MCF 10A (cell line): ENCODE measurements at regions of chr4 and their contacts with region 1.

Region 1: DNA sequence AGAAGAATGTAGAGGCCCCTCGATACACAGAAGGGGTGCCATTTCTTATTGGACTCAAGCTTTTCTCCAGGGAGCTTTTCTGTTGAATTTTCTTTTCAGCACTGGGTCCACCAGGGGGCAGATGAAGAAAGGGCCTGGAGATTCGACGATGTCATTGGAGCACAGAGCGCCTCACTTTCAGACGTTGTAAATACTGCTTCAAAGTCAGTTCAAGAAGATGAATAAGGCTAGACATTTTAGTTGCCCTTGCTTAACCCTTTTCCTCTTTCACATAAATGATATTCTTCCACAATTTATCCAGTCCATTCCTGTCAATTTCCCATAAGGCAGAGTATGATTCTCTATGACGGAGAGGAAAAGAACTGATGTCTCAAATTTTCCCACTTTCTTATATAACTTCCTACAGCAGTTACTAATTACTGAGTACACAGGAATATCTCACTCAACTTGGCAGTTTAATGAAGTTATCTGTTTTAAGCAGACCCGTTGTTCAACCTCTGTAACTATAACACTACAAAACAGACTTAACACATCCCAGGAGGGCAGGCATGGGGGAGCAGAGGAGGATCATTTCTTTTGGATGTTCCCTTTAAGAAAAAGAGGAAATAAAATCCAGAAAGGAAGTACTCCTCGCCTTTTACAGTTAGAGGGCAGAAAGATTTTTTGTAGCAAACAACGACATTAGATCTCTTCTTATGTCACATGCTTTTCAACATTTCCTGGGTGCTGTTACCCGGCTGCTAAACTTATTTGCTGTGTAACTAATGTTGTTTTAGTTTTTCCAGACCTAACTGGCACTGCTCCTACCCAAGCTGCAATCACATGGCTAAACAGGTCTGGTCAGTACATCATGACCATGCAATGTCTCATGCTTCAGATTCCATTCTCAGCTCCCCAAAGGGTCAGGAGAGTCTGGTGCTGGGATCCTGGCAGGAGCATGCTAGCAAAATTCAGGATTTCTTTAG is 12.2 kb upstream of the CENPU start:
- DNase-seq: peak; percentile 76
- H3K4me3 Mint-ChIP-seq: peak overlapping the region; percentile 38
- H3K27ac Mint-ChIP-seq: peak overlapping the region; percentile 84
- H3K4me1 Mint-ChIP-seq: peaks cover 26% of the 10 kb centered on the region
- H3K27me3 Mint-ChIP-seq: no peaks in the 10 kb centered on the region
- CTCF ChIP-seq: peak; percentile 57

Region 2: DNA sequence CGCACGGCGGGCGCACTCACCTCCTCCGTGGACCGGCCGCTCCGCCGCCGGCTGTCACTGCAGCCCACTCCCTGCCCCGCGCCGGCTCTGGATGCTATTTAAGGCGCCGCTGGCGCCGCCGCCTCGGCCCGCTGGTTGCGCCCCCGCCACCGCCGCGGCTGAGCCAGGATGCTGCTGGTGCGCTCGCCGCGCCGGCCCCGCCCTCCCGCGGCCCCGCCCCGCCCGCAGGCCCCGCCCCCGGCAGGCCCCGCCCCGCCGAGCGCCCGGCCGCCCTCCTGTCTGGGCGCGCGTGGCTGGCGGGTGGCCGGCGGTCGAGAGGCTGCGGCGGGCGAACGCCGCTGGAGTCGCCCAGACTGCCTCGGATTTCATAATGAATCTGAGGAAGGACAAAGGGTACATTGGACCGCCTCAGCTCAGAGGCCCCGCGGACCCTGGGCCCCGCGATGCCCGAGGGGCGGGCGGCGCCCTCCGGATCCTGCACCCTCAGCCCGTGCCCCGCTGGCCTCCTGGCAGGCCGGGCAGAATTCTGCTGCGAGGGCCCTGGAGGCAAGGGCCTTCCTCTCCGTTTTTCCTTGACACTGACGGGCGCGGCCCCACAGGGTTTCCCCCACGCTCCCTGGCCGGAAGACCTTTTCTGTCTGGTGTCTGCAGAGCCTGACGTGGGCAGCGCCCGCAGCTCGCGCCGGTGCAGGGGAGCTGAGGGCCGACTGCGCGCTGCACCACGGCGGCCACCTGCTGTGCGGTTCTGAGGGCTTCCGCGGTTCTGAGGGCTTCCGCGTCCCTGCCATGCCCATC is 80.0 kb after region 1 on chr4 and contains the start of gene ACSL1:
- CTCF ChIA-PET with region 1: interaction called, 5 read pairs
- POLR2A ChIA-PET with region 1: interaction called, 4 read pairs
- intact Hi-C with region 1: loop called (anchors 5 kb)
- DNase-seq: peak; percentile 65
- H3K4me3 Mint-ChIP-seq: peak within 1 kb of the TSS; percentile 87
- H3K27ac Mint-ChIP-seq: peak within 1 kb of the TSS; percentile 50
- H3K4me1 Mint-ChIP-seq: peaks cover 23% of the 10 kb centered on the region
- H3K27me3 Mint-ChIP-seq: no peaks in the 10 kb centered on the region
- CTCF ChIP-seq: no peak
- total RNA-seq, gene ACSL1: 99.5 and 105 TPM in 2 replicates

Region 3: GRCh38 chr4:184911310-184911709 is 165.2 kb after region 1 on chr4:
- CTCF ChIA-PET with region 1: interaction called, 4 read pairs
- POLR2A ChIA-PET with region 1: interaction called, 3 read pairs
- intact Hi-C with region 1: loop called (anchors 1 kb)
- DNase-seq: peak; percentile 93
- H3K4me3 Mint-ChIP-seq: no peak overlapping the region
- H3K27ac Mint-ChIP-seq: no peak overlapping the region
- H3K4me1 Mint-ChIP-seq: peaks cover 28% of the 10 kb centered on the region
- H3K27me3 Mint-ChIP-seq: no peaks in the 10 kb centered on the region
- CTCF ChIP-seq: no peak

Region 4: DNA sequence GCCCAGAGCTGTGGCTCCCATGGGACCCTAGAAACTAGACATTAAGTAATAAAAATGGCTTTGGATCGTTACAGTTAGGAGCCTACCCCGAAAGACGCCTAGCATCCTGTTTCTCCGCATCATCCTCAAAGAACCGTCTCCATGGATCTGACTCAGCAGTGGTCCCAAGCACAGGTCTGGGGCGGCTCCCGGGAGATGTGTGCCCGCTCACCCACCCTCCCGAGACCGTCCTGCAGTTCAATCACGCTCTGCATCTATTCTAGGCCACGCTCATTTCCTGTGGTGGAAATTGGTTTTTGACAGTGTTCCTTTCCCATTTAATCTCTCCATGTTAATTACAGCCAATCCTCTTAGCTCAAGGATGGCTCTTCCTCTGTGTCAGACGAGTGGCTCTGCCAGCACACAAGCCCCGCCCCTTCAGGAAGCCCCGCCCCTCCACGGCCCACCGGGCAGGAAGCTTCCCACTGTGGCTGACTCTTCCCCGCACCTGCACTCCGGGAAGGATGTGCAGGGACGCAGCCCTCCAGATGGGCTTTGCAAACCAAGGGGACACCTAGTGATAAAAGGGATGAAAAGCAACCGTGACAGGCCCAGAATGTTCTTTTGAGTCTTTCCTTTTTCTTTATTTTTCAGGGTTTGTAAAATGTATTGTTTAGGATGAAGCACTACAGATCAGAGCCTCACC is 237.7 kb after region 1 on chr4:
- CTCF ChIA-PET with region 1: interaction called, 7 read pairs
- POLR2A ChIA-PET with region 1: interaction called, 3 read pairs
- intact Hi-C with region 1: loop called (anchors 1 kb)
- DNase-seq: peak; percentile 70
- H3K4me3 Mint-ChIP-seq: no peak overlapping the region
- H3K27ac Mint-ChIP-seq: no peak overlapping the region
- H3K4me1 Mint-ChIP-seq: peaks cover 3% of the 10 kb centered on the region
- H3K27me3 Mint-ChIP-seq: no peaks in the 10 kb centered on the region
- CTCF ChIP-seq: peak; percentile 47

Region 5: GRCh38 chr4:185005216-185005819 is 259.2 kb after region 1 on chr4:
- CTCF ChIA-PET with region 1: interaction called, 7 read pairs
- POLR2A ChIA-PET with region 1: no interaction called
- intact Hi-C with region 1: loop called (anchors 5 kb)
- DNase-seq: peak; percentile 88
- H3K4me3 Mint-ChIP-seq: peak overlapping the region; percentile 26
- H3K27ac Mint-ChIP-seq: no peak overlapping the region
- H3K4me1 Mint-ChIP-seq: peaks cover 8% of the 10 kb centered on the region
- H3K27me3 Mint-ChIP-seq: peaks cover 29% of the 10 kb centered on the region
- CTCF ChIP-seq: peak; percentile 93

Region 6: DNA sequence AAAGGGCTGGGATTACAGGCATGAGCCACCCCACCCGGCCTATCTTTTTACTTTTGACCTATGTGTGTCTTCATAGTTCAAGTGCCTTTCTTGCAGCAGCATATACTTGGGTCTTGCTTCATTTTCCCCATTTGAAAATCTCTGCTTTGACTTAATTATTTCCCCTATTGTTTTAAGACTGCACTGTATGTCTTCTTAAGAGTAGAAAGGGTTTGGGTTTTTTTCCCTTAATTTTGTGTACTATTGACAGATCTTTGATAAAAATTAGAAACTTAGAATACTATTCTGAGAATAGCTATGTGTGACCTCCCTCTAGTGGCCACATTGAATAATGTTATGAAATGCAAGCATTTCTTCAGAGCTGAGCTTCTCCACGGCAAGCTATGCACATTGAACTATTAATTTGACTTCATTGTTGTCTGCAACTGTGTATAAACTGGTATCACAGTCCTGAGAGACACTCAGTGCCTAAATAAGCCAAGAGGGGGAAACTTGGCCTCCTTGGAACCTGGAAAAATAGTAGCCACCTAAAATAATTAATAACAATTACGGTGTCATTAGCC is 388.3 kb after region 1 on chr4:
- CTCF ChIA-PET with region 1: interaction called, 7 read pairs
- POLR2A ChIA-PET with region 1: no interaction called
- intact Hi-C with region 1: loop called (anchors 1 kb)
- DNase-seq: peak; percentile 61
- H3K4me3 Mint-ChIP-seq: no peak overlapping the region
- H3K27ac Mint-ChIP-seq: no peak overlapping the region
- H3K4me1 Mint-ChIP-seq: no peaks in the 10 kb centered on the region
- H3K27me3 Mint-ChIP-seq: no peaks in the 10 kb centered on the region
- CTCF ChIP-seq: peak; percentile 64